Naive thymus-derived CD4-positive, alpha-beta T cell (primary cell): ENCODE measurements at regions of chr2 and their contacts with region 1.

Region 1: GRCh38 chr2:148674063-148675020 is 29.8 kb downstream of the EPC2 start:
- DNase-seq: peak in 6 of 9 donors; percentile 13 to 56 (median 32)
- ATAC-seq: peak; percentile 85
- H3K4me3 ChIP-seq: no peak overlapping the region
- H3K4me3 Mint-ChIP-seq: peak overlapping the region in 9 of 10 donors; percentile 16 to 77 (median 46)
- H3K27ac ChIP-seq: no peak overlapping the region
- H3K27ac Mint-ChIP-seq: peak overlapping the region in 6 of 9 donors; percentile 18 to 85 (median 44)
- H3K4me1 ChIP-seq: peaks cover 6 to 26% of the 10 kb centered on the region in 2 donors
- H3K4me1 Mint-ChIP-seq: peaks cover 44 to 88% (median 83%) of the 10 kb centered on the region in 7 donors
- H3K27me3 ChIP-seq: no peaks in the 10 kb centered on the region
- H3K27me3 Mint-ChIP-seq: no peaks in the 10 kb centered on the region

Region 2: GRCh38 chr2:148338541-148338940 is 335.8 kb before region 1 on chr2:
- CTCF ChIA-PET with region 1: no interaction called
- POLR2A ChIA-PET with region 1: no interaction called
- intact Hi-C with region 1: no loop called
- DNase-seq: no peak
- ATAC-seq: no peak
- H3K4me3 ChIP-seq: no peak overlapping the region
- H3K4me3 Mint-ChIP-seq: no peak overlapping the region
- H3K27ac ChIP-seq: no peak overlapping the region
- H3K27ac Mint-ChIP-seq: peak overlapping the region in 1 of 9 donors; percentile 45
- H3K4me1 ChIP-seq: no peaks in the 10 kb centered on the region
- H3K4me1 Mint-ChIP-seq: peaks cover 0 to 1% (median 0%) of the 10 kb centered on the region in 7 donors
- H3K27me3 ChIP-seq: no peaks in the 10 kb centered on the region
- H3K27me3 Mint-ChIP-seq: no peaks in the 10 kb centered on the region

Region 3: DNA sequence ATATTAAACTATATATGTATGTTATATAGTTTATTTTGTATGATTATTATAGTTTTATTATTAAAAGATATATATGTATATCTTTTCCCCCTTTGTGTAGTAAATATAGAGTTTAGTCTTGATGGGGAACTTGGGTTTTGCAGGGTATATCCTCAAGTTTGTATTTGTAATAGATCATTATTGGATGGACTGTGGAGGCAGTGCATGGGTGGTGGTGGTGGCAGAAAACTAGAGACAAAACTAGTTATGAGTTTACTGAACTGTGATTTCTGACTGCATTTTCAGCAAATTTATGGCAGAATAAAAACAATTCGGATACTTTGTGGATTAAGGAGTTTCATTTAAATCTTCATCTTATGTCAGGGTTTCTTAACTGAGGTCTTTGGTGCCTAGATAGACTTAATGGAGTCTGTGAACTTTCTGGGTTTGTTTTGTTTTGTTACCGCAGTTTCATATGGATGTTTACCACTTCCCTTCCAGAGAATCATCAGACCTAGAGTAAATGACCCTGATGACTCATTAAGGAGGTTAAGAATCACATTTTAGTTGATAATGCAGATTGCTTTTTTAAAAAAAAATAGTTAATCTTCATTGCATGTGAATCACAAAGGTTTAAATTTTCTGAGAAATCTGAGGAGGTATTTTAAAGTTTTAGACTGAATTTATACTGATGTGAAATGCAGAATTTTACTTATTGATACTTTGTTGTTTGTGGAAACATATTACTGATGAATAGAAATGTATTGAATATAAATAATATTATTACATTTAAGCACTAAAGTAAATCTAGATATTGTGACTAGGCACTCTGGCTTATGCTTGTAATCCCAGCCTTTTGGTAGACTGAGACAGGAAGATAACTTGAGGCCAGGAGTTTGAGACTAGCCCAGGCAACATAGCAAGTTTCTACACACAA is 15.3 kb before region 1 on chr2:
- CTCF ChIA-PET with region 1: no interaction called
- POLR2A ChIA-PET with region 1: interaction called, 3 read pairs
- intact Hi-C with region 1: loop called in 1 of 2 experiments (anchors 2 kb)
- DNase-seq: peak in 6 of 9 donors; percentile 12 to 41 (median 28)
- ATAC-seq: peak; percentile 81
- H3K4me3 ChIP-seq: no peak overlapping the region
- H3K4me3 Mint-ChIP-seq: peak overlapping the region; percentile 21 to 81 (median 64)
- H3K27ac ChIP-seq: peak overlapping the region; percentile 5
- H3K27ac Mint-ChIP-seq: peak overlapping the region; percentile 65 to 93 (median 80)
- H3K4me1 ChIP-seq: peaks cover 47 to 48% of the 10 kb centered on the region in 2 donors
- H3K4me1 Mint-ChIP-seq: peaks cover 50 to 93% (median 82%) of the 10 kb centered on the region in 7 donors
- H3K27me3 ChIP-seq: no peaks in the 10 kb centered on the region
- H3K27me3 Mint-ChIP-seq: no peaks in the 10 kb centered on the region

Region 4: DNA sequence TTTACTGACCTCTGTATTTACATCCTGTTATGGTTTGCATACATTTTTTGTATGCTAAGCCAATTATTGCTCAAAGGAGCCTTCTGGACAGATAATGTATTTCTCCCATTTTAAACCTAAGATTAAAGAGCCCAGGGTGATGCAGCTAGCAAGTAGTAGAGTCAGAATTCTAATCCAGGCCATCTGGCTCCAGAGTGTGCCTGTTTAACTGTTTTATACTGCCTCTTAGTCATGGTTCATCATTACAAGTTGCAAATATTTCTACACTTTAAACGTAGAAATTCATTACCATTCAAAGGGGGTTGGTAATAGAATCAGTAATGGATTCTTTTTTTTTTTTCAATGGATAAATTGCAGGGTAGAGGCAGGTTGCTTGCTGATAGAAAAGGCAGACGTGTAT is 22.6 kb after region 1 on chr2:
- CTCF ChIA-PET with region 1: no interaction called
- POLR2A ChIA-PET with region 1: no interaction called
- intact Hi-C with region 1: no loop called
- DNase-seq: no peak
- ATAC-seq: no peak
- H3K4me3 ChIP-seq: no peak overlapping the region
- H3K4me3 Mint-ChIP-seq: no peak overlapping the region
- H3K27ac ChIP-seq: no peak overlapping the region
- H3K27ac Mint-ChIP-seq: peak overlapping the region in 4 of 9 donors; percentile 3 to 40 (median 20)
- H3K4me1 ChIP-seq: no peaks in the 10 kb centered on the region
- H3K4me1 Mint-ChIP-seq: peaks cover 3 to 55% (median 42%) of the 10 kb centered on the region in 7 donors
- H3K27me3 ChIP-seq: no peaks in the 10 kb centered on the region
- H3K27me3 Mint-ChIP-seq: no peaks in the 10 kb centered on the region

Region 5: GRCh38 chr2:148720501-148721001 is 46.2 kb after region 1 on chr2:
- CTCF ChIA-PET with region 1: no interaction called
- POLR2A ChIA-PET with region 1: no interaction called
- intact Hi-C with region 1: no loop called
- DNase-seq: no peak
- ATAC-seq: no peak
- H3K4me3 ChIP-seq: no peak overlapping the region
- H3K4me3 Mint-ChIP-seq: peak overlapping the region in 9 of 10 donors; percentile 5 to 78 (median 30)
- H3K27ac ChIP-seq: no peak overlapping the region
- H3K27ac Mint-ChIP-seq: peak overlapping the region in 5 of 9 donors; percentile 1 to 60 (median 12)
- H3K4me1 ChIP-seq: peaks cover 21 to 28% of the 10 kb centered on the region in 2 donors
- H3K4me1 Mint-ChIP-seq: peaks cover 73 to 97% (median 90%) of the 10 kb centered on the region in 7 donors
- H3K27me3 ChIP-seq: no peaks in the 10 kb centered on the region
- H3K27me3 Mint-ChIP-seq: no peaks in the 10 kb centered on the region